Ascending aorta (tissue), 2 donors: ENCODE measurements at regions of chr1 and their contacts with region 1.

Region 1: GRCh38 chr1:109397538-109398342 is at the start of gene SORT1:
- DNase-seq: peak; percentile 66 to 93
- H3K4me3 ChIP-seq: peak within 1 kb of the TSS; percentile 77 to 83
- H3K27ac ChIP-seq: peak within 1 kb of the TSS; percentile 90 to 91
- H3K4me1 ChIP-seq: peaks cover 0 to 11% of the 10 kb centered on the region in 2 donors
- H3K27me3 ChIP-seq: no peaks in the 10 kb centered on the region
- CTCF ChIP-seq: peak in 2 of 3 experiments; percentile 3 to 44
- total RNA-seq, gene SORT1: 111 TPM

Region 2: DNA sequence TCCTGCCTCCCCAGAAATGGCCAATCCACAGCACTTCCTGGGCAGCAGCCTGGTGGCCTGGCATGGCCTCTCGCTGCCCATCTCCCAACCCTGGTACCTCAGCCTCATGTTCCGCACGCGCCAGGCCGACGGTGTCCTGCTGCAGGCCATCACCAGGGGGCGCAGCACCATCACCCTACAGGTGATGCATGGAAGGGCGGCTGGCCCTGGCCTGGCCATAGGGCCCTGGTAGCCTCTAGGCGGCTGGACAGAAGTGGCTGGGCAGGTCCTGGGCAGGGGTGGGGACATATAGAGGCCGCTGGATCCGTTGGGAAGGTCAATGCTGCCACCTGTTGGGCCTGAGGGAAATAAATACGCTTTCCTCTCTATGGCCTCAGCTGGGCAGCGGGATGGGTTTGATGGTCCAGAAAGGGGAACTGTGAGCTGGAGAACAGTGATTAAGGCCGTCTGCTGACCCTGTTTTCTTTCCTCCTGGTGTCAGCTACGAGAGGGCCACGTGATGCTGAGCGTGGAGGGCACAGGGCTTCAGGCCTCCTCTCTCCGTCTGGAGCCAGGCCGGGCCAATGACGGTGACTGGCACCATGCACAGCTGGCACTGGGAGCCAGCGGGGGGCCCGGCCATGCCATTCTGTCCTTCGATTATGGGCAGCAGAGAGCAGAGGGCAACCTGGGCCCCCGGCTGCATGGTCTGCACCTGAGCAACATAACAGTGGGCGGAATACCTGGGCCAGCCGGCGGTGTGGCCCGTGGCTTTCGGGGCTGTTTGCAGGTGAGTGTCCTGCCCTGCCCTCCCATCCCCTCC is 133.9 kb before region 1 on chr1:
- intact Hi-C with region 1: loop called (anchors 1 kb)
- DNase-seq: peak; percentile 34 to 87
- H3K4me3 ChIP-seq: no peak overlapping the region
- H3K27ac ChIP-seq: no peak overlapping the region
- H3K4me1 ChIP-seq: no peaks in the 10 kb centered on the region
- H3K27me3 ChIP-seq: no peaks in the 10 kb centered on the region
- CTCF ChIP-seq: peak; percentile 85 to 97 (median 93)

Region 3: GRCh38 chr1:109277434-109278204 is 120.1 kb before region 1 on chr1:
- intact Hi-C with region 1: loop called (anchors 1 kb)
- DNase-seq: peak in 1 of 2 donors; percentile 90
- H3K4me3 ChIP-seq: no peak overlapping the region
- H3K27ac ChIP-seq: no peak overlapping the region
- H3K4me1 ChIP-seq: peaks cover 0 to 10% of the 10 kb centered on the region in 2 donors
- H3K27me3 ChIP-seq: no peaks in the 10 kb centered on the region
- CTCF ChIP-seq: peak; percentile 89 to 91 (median 89)

Region 4: DNA sequence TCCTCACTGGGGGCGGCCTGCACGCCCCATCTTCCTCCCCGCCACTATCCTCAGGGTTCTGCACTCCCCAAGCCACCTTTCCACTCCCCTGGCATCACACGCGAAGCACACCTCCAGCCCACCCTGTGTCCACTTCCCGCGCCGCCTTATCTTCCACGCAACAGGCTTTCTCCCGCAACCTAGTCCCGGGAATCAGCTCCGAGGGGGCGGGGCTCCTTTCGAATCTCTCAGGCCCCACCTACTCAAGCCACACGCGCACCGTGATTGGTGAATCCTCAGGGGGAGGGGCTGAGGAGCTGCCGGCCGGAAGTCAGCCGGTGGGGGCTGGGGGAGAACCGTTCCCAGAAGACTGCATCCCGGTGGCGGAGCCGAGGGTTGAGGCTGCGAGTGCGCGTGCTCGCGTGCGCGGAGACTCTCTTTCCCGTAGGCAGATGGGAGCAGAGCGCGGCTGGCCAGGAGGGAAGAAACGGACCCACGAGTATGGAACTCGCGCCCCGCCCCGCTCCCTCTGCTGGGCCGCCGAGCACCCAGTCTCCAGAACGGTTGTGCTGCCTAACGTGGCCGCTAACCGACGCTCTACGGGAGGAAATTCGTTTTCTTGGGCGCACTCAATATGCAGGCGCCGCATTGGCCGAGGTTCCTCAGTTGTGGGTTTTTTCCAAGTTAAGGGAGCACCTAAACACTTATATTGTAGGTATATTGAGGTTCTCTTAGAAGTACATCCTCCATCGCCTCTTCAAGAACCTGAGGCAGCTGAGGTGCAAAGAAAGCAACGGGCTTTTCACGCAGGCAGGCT is 114.6 kb before region 1 on chr1 and contains the start of gene PSRC1:
- intact Hi-C with region 1: loop called (anchors 1 kb)
- DNase-seq: peak; percentile 84 to 97
- H3K4me3 ChIP-seq: peak within 1 kb of the TSS; percentile 66 to 84
- H3K27ac ChIP-seq: peak within 1 kb of the TSS; percentile 84 to 91
- H3K4me1 ChIP-seq: peaks cover 0 to 13% of the 10 kb centered on the region in 2 donors
- H3K27me3 ChIP-seq: no peaks in the 10 kb centered on the region
- CTCF ChIP-seq: peak; percentile 45 to 65 (median 64)
- total RNA-seq, gene PSRC1: 1.3 TPM

Region 5: GRCh38 chr1:109370712-109371455 is 26.9 kb before region 1 on chr1:
- intact Hi-C with region 1: loop called (anchors 1 kb)
- DNase-seq: peak in 1 of 2 donors; percentile 69
- H3K4me3 ChIP-seq: peak overlapping the region; percentile 41 to 45
- H3K27ac ChIP-seq: peak overlapping the region; percentile 87 to 92
- H3K4me1 ChIP-seq: peaks cover 11 to 70% of the 10 kb centered on the region in 2 donors
- H3K27me3 ChIP-seq: no peaks in the 10 kb centered on the region
- CTCF ChIP-seq: no peak

Region 6: DNA sequence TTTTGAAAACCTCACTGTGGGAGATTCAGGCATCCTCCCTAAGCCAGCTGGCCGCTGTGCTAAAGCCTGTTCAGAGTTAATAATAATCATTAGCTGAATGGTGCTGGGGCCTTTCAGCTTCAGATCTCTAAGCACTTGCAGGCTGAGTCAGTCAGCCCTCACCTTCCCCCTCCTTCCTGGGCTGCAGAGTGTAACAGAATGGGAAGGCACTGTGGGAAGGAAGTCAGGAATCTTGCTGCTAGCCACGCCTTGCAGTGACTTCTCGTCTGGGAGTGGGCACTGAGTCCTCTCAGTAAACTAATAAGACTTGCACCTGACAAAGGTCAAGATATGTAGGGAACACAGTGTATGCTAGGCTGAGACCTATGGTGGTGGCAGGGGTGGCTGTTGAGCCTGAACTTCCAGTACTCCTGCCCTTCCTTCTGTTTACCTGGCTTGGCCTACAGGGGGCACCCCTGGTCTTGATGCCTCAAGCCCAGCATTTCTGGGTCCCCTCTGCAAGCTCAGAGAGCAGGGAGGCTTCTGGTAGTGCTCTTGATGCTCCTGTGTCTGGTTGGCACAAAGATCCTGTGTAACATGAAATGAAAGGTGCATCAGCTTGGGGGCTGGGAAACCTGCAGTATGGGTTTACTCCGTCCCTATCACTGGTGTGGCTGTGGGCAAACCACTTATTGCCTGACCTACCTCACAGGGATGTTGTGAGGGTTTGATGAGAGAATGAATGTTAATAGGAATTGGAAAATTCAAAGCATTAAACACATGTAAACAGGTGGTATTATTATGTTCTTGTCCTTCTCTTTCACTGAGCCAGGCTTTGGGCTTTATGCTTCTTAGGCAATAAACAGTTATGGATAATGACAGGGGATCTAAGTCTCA is 102.2 kb after region 1 on chr1:
- intact Hi-C with region 1: no loop called
- DNase-seq: peak in 1 of 2 donors; percentile 72
- H3K4me3 ChIP-seq: no peak overlapping the region
- H3K27ac ChIP-seq: peak overlapping the region; percentile 53 to 64
- H3K4me1 ChIP-seq: peaks cover 12 to 35% of the 10 kb centered on the region in 2 donors
- H3K27me3 ChIP-seq: no peaks in the 10 kb centered on the region
- CTCF ChIP-seq: peak in 2 of 3 experiments; percentile 14 to 35